ENCODE measurements at regions of chr14 and their contacts with region 1.

Region 1: DNA sequence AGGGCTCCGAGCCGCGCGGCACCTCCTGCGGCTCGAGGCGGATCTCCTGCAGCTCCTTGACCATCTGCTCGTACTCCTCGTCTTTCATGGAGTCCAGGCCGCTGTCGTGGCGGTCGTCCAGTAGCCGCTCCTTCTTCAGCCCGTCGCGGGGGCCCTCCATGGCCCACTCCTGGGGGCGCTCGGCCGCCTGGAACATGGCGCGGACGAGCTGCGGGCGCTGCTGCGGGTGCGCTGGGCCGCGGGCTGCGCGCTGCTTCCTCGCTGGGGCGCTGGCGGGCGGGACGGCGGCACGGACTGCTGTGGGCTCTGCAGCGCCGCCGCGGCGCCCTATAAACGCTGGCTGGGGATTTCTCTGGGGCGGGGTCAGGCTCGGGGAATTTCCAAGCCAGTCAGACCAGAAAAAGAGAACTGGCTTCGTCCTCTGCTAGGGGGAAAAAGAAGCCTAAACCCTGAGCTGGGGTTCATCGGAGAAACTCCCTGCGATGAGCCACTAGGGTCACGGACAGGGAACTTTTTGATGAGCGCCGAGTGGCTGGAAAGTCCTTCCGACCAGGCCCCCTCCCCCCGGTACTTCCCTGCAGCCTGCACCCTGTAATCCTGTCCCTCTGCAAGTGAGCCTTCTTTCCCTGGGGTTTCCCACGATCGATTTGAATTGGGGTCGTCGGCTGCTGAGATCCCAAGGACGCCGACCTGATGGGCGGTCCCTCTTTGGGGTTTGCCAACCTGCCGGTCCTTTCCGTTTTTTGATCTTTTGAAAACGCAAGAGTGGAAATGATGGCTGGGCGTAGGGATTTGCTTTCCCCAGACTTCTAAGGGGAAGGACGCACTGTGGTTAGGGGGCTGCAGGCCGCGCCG is at the start of gene NFKBIA:
- H3K4me3 ChIP-seq: peak within 1 kb of the TSS; percentile 96
- H3K27ac ChIP-seq: peak within 1 kb of the TSS; percentile 100
- H3K4me1 ChIP-seq: 0 out of 2 replicates have a peak, but pooled peaks cover 4% of the 10 kb centered on the region
- CTCF ChIP-seq: peak; percentile 54; the same call in 1 of the 2 replicates

Region 2: DNA sequence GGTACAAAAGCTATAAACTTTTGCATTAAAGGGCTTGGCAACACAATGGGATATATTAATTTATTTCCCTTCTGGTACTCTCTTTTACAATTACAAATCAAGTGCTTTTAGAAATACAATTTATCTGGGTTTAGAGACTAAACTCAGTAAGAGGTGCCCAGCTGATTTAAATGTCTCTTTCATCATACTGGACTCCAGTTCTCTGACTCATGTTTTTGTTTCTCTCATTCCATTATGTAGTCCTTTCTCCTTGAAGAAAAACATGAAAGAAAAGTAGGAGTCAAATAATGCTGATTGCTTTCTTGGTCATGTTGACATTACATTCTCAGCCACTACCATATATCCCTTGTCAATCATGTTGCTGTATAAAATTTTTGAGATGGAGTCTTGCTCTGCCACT is 654.0 kb before region 1 on chr14:
- CTCF ChIA-PET with region 1: no interaction called
- POLR2A ChIA-PET with region 1: no interaction called
- H3K4me3 ChIP-seq: no peak overlapping the region
- H3K27ac ChIP-seq: no peak overlapping the region
- H3K4me1 ChIP-seq: no peaks in the 10 kb centered on the region
- CTCF ChIP-seq: no peak

Region 3: GRCh38 chr14:34833549-34834523 is 570.8 kb before region 1 on chr14:
- CTCF ChIA-PET with region 1: no interaction called
- POLR2A ChIA-PET with region 1: no interaction called
- H3K4me3 ChIP-seq: no peak overlapping the region
- H3K27ac ChIP-seq: no peak overlapping the region
- H3K4me1 ChIP-seq: 0 out of 2 replicates have a peak, but pooled peaks cover 4% of the 10 kb centered on the region
- CTCF ChIP-seq: no peak

Region 4: DNA sequence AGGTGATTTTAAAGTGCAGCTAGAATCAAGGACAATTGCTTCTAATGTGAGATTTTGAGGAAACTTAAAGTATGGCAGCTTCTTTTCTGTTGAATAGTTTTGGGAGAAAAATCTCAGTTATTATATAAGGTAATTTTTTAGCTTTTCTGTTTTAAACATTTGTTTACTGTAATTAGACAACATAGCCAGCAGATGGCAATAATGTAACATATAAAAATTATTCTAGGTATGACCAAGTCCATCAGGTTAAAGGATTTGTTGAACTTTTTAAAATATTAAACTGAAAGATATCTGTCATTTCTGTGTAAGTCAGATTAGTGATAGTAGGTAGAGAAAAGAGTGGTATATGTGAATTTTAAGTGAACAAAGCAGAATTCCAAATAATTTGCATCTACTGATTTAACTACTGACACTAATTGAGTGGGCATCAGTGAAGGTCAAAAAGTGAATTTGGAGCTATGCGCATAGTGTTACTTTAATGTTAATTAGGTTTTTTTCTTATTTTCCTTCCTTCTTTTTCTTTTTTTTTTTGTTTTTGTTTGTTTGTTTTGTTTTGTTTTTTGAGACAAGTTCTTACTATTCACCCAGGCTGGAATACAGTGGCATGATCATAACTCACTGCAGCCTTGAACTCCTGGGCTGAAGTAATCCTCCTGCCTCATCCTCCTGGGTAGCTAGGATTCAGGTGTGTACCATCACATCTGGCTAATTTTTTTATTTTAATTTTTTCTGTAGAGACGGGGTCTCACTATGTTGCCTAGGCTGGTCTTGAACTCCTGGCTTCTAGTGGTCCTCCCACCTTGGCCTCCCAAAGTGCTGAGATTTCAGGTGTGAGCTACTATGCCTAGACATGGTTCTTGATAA is 263.7 kb before region 1 on chr14:
- CTCF ChIA-PET with region 1: interaction called, 16 read pairs
- POLR2A ChIA-PET with region 1: interaction called, 8 read pairs
- H3K4me3 ChIP-seq: no peak overlapping the region
- H3K27ac ChIP-seq: no peak overlapping the region
- H3K4me1 ChIP-seq: no peaks in the 10 kb centered on the region
- CTCF ChIP-seq: no peak

Region 5: DNA sequence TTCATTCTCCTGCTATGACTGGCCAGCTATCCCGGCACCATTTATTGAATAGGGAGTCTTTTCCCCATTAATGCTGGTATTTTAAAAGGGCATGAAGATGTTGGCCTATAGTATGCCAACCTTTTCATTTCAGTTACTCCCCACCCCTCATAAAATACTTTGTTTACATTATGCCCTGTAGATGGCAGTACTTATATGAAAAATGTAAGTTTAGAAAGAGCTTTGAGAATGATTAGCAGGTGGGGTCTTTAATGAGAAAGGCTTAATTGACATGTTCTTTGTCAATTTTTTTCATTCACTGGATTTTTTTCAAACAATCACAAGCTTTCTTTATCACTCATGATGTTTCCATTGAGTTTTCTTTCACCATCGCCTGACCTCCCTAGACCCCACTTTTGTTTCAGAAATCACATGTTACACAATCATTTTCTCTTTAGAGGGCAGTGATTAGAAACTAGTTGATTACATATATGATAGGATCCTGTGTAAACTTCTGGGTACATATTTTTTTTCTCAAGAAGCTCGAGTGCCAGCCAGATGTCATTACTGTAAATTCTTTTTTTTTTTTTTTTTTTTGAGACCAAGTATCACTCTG is 175.1 kb before region 1 on chr14:
- CTCF ChIA-PET with region 1: interaction called, 12 read pairs
- POLR2A ChIA-PET with region 1: no interaction called
- H3K4me3 ChIP-seq: no peak overlapping the region
- H3K27ac ChIP-seq: no peak overlapping the region
- H3K4me1 ChIP-seq: no peaks in the 10 kb centered on the region
- CTCF ChIP-seq: no peak

Region 6: DNA sequence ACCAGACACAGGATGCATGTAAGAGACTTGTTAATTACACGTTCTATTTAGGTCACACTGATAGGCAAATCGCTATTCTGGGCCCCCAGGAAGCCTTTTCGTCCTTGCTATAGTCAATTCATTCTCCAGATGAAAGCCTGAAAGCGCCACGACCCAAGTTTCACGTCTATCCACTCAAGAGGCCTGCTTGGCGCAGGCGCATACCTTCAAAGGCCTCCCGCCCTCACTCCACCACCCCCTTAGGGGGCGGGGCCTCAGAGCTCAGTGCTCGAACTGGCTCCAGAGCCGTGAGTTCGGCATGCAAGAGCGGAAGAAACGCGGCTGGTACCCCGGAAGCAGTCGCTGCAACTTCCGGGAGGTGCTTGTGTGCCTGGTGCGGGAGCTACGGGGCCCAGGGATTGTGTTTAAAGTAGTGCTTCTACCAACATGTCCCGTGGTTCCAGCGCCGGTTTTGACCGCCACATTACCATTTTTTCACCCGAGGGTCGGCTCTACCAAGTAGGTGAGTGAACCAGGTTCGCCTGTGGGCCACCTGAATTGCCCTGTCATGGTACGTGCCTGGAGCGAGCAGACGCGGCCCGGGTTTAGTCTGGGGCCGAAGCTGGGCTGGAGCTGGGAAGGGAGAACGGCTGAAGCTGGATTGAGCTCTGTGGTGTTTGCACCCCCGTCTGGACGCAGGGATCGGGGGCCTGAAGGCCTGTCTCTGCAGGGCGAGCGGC is 112.5 kb before region 1 on chr14 and contains the start of gene PSMA6:
- CTCF ChIA-PET with region 1: interaction called, 3 read pairs
- POLR2A ChIA-PET with region 1: interaction called, 38 read pairs
- H3K4me3 ChIP-seq: peak within 1 kb of the TSS; percentile 95
- H3K27ac ChIP-seq: peak within 1 kb of the TSS; percentile 80
- H3K4me1 ChIP-seq: peaks cover 12% of the 10 kb centered on the region
- CTCF ChIP-seq: no peak; the same call in 1 of the 2 replicates

Region 7: GRCh38 chr14:35385042-35385839 is 19.4 kb before region 1 on chr14:
- CTCF ChIA-PET with region 1: no interaction called
- POLR2A ChIA-PET with region 1: interaction called, 16 read pairs
- H3K4me3 ChIP-seq: no peak overlapping the region
- H3K27ac ChIP-seq: no peak overlapping the region
- H3K4me1 ChIP-seq: no peaks in the 10 kb centered on the region
- CTCF ChIP-seq: no peak

Region 8: GRCh38 chr14:35416108-35416750 is 11.6 kb after region 1 on chr14:
- CTCF ChIA-PET with region 1: interaction called, 6 read pairs
- POLR2A ChIA-PET with region 1: interaction called, 11 read pairs
- H3K4me3 ChIP-seq: no peak overlapping the region
- H3K27ac ChIP-seq: no peak overlapping the region
- H3K4me1 ChIP-seq: peaks cover 3% of the 10 kb centered on the region
- CTCF ChIP-seq: no peak

Region 9: GRCh38 chr14:35458442-35458841 is 53.8 kb after region 1 on chr14:
- CTCF ChIA-PET with region 1: no interaction called
- POLR2A ChIA-PET with region 1: no interaction called
- H3K4me3 ChIP-seq: no peak overlapping the region
- H3K27ac ChIP-seq: no peak overlapping the region
- H3K4me1 ChIP-seq: no peaks in the 10 kb centered on the region
- CTCF ChIP-seq: no peak

Region 10: DNA sequence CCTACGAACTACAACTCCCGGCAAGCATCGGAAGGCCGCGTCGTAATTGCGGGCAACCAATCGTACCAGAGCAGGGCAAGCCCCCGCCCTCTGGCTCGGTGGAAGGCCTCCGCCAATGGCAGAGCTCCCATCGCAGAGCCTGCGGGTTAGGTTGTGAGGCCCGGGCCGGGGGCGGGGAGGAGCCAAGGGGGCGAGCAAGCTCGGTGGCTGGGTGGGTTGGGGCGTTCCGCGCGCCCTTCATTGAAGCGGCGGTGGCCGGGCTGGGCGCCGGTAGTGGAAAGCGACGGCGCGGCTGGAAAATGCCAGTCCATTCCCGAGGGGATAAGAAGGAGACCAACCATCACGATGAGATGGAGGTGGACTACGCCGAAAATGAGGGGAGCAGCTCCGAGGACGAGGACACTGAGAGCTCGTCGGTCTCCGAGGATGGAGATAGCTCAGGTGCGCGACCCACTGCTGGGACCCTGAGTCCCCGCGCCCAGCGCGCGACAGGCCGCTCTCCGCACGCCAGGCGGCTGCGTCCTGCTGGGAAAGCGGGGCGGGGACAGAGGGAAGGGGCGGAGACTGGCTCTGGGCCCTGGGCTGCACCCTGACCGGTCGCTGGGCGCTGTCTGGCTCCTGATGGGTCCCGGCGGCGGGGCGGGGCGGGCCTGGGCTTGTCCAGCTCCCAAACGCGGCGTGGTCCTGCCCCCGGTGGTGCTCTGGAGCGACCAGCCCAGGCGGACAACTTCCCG is 421.7 kb after region 1 on chr14 and contains the start of gene BRMS1L:
- CTCF ChIA-PET with region 1: no interaction called
- POLR2A ChIA-PET with region 1: interaction called, 13 read pairs
- H3K4me3 ChIP-seq: peak within 1 kb of the TSS; percentile 92
- H3K27ac ChIP-seq: peak within 1 kb of the TSS; percentile 97
- H3K4me1 ChIP-seq: peaks cover 2% of the 10 kb centered on the region; the same call in 1 of the 2 replicates
- CTCF ChIP-seq: peak; percentile 76

Region 11: DNA sequence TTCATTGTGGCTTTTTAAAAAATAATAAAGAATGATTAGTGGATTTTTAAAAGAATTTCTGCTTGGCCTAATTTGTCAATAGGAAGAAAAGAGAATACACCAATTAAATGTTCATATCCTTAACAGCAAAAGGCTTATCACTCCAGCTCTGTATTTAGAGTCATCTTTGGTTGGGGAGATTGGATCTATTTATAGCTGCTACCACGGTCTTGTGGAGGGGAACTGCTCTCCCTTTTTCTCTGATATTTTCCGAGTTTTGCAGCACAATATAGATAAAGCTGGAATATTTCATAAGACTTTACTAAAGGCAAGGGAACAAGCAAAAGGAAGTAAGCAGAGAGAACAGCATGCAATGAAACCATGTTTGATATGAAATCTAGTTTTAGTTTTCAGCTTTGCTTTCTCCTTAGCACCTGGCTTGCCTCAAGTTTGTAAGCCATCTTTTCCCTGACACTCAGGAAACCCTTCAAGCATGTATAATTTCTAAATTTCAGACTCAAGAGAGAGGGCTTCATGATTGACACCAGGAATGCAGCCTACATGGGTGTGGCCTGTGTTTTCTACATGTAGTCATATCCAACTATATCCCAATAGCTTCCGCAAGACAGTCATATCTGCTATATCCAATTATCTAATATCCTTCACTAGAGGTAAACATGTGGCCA is 456.7 kb after region 1 on chr14:
- CTCF ChIA-PET with region 1: no interaction called
- POLR2A ChIA-PET with region 1: no interaction called
- H3K4me3 ChIP-seq: no peak overlapping the region
- H3K27ac ChIP-seq: no peak overlapping the region
- H3K4me1 ChIP-seq: no peaks in the 10 kb centered on the region; the same call in 1 of the 2 replicates
- CTCF ChIP-seq: no peak